MCF 10A (cell line): ENCODE measurements at regions of chr7 and their contacts with region 1.

Region 1: DNA sequence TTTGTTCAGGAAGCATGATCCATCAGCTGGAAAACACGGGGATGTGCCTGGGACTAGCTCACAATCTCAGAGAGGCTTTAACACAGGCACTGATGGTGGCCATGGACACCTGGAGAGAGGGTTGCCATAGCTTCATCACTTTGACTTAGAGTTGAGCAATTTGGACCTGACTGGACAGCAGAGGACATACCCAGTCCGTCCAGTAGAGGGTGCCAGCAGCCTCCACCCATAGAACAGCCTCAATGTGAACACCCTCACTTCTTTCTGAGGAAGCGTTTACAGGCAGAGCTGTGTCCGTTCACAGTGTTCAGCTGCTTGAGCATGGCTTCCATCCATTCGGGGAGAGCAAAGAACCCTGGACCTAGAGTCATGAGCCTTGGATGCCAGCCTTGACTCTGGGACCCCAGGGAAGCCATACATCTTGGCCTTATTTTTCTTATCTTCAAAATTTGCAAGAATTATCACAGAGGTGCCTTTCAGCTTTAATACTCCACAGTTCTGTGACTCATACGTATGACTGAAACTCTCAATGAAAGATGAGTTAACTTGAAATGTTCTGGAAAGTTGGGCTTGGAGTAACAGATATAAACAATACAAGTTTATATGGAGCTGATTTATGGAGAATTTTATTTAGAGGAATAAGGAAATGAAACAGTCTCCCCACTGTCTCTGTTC is 302.9 kb upstream of the PODXL start:
- DNase-seq: peak; percentile 76
- H3K4me3 Mint-ChIP-seq: no peak overlapping the region
- H3K27ac Mint-ChIP-seq: no peak overlapping the region
- H3K4me1 Mint-ChIP-seq: peaks cover 6% of the 10 kb centered on the region
- H3K27me3 Mint-ChIP-seq: peaks cover 14% of the 10 kb centered on the region
- CTCF ChIP-seq: peak; percentile 65

Region 2: GRCh38 chr7:131124001-131124629 is 735.2 kb before region 1 on chr7:
- CTCF ChIA-PET with region 1: no interaction called
- POLR2A ChIA-PET with region 1: no interaction called
- intact Hi-C with region 1: no loop called
- DNase-seq: no peak
- H3K4me3 Mint-ChIP-seq: no peak overlapping the region
- H3K27ac Mint-ChIP-seq: no peak overlapping the region
- H3K4me1 Mint-ChIP-seq: no peaks in the 10 kb centered on the region
- H3K27me3 Mint-ChIP-seq: no peaks in the 10 kb centered on the region
- CTCF ChIP-seq: no peak

Region 3: DNA sequence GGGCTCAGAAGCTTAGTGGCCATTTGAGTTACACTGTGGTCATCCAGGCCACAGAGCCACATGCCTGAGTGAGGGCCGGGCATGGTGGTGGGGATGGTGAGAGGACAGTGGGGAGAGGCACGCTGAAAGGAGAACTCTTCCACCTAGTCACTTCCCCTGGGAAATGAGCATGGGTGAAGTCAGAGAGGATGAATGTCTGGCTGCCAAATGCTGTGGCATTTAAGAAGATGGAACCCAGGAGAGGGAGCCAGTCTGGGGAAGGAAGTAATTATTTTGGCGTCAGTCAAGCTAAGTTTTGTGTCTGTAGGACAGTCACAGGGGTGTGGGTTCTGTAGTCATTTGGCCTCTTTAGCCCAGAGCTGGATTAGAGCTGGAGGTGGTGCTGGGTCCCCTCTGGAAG is 216.9 kb before region 1 on chr7:
- CTCF ChIA-PET with region 1: no interaction called
- POLR2A ChIA-PET with region 1: no interaction called
- intact Hi-C with region 1: no loop called
- DNase-seq: no peak
- H3K4me3 Mint-ChIP-seq: no peak overlapping the region
- H3K27ac Mint-ChIP-seq: no peak overlapping the region
- H3K4me1 Mint-ChIP-seq: no peaks in the 10 kb centered on the region
- H3K27me3 Mint-ChIP-seq: no peaks in the 10 kb centered on the region
- CTCF ChIP-seq: no peak

Region 4: GRCh38 chr7:131843898-131844331 is 15.4 kb before region 1 on chr7:
- CTCF ChIA-PET with region 1: interaction called, 23 read pairs
- POLR2A ChIA-PET with region 1: no interaction called
- intact Hi-C with region 1: no loop called
- DNase-seq: peak; percentile 43
- H3K4me3 Mint-ChIP-seq: no peak overlapping the region
- H3K27ac Mint-ChIP-seq: no peak overlapping the region
- H3K4me1 Mint-ChIP-seq: no peaks in the 10 kb centered on the region
- H3K27me3 Mint-ChIP-seq: no peaks in the 10 kb centered on the region
- CTCF ChIP-seq: no peak

Region 5: DNA sequence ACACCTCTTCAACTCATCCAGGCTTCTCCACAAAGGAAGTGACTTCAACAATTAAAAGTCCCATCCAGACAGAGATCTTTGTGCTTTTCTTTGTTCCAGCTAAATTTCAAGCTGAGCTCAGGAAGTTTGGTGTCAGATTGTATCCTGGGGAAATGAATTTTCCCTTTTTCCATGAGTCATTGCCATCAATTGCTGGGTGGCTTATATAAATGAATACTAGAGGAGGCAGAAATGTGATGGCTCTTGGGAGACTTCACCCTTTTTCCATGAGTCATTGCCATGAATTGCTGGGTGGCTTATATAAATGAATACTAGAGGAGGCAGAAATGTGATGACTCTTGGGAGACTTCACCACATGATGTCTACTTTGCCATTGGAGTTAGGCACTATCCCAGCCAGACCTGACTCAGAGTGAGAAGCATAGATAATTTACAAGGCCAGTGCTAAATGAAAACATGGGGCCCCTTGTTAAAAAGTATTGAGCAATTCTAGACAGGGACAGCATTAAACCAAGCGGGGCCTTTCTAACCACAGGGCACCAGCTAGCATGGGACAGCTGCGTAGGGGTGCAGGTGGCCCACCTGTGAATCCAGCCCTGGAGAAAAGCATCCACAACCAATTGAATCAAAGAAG is 36.4 kb after region 1 on chr7:
- CTCF ChIA-PET with region 1: interaction called, 7 read pairs
- POLR2A ChIA-PET with region 1: no interaction called
- intact Hi-C with region 1: loop called (anchors 5 kb)
- DNase-seq: peak; percentile 90
- H3K4me3 Mint-ChIP-seq: no peak overlapping the region
- H3K27ac Mint-ChIP-seq: peak overlapping the region; percentile 56
- H3K4me1 Mint-ChIP-seq: peaks cover 14% of the 10 kb centered on the region
- H3K27me3 Mint-ChIP-seq: no peaks in the 10 kb centered on the region
- CTCF ChIP-seq: no peak

Region 6: DNA sequence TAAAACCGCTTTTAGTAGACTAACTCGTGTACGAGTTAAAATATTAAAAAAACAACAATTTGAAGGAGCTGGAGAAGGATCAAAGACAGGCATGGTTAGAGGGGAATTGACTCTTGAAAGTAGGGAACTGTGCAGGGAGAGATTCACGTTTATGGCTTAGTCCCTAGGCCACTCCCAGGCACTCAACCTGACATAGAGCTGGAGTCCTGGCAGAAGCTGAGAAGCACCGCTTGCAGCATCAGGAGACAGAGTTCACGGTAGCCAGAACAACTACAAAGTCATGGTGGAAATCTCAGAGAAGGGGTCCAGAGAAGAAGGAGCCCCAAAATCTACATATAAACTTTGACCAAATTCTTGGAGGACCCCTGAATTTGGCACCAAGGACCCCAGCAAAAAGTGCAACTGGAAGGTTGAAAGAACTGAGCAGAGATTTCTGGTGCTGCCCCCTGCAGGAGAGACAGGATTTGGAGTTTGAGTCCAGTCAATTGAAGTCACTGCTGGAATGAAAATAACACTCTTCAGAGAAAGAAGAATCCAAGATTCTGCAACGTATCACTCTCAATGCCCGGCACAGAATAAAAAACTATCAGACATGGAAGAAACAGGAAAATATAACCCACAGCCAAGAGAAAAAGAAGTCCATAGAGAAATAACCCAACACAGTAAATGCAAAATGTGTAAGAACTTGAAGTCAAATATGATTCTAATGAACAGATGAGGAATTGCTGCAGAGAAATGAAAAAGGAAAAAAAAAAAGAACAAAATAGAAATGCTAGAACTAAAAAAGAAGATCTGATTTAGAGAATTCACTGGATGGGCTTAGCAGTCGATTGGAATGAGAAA is 190.4 kb after region 1 on chr7:
- CTCF ChIA-PET with region 1: interaction called, 4 read pairs
- POLR2A ChIA-PET with region 1: no interaction called
- intact Hi-C with region 1: loop called (anchors 1 kb)
- DNase-seq: peak; percentile 54
- H3K4me3 Mint-ChIP-seq: no peak overlapping the region
- H3K27ac Mint-ChIP-seq: no peak overlapping the region
- H3K4me1 Mint-ChIP-seq: no peaks in the 10 kb centered on the region
- H3K27me3 Mint-ChIP-seq: peaks cover 23% of the 10 kb centered on the region
- CTCF ChIP-seq: peak; percentile 48

Region 7: DNA sequence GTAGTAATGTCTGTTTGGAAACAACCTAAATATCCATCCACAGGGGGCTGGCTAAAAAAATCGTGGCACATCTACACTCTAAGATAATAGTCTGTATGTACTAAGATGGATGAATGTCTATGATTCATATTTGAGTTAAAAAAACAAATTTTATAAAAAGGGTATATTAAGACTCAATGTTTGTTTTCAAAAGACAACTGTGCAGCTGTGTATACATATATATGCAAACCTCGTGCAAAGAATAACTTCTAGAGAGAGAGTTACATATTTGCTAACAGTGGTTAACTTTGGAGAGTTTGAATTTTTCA is 393.5 kb after region 1 on chr7:
- CTCF ChIA-PET with region 1: interaction called, 6 read pairs
- POLR2A ChIA-PET with region 1: no interaction called
- intact Hi-C with region 1: loop called (anchors 1 kb)
- DNase-seq: no peak
- H3K4me3 Mint-ChIP-seq: no peak overlapping the region
- H3K27ac Mint-ChIP-seq: no peak overlapping the region
- H3K4me1 Mint-ChIP-seq: no peaks in the 10 kb centered on the region
- H3K27me3 Mint-ChIP-seq: no peaks in the 10 kb centered on the region
- CTCF ChIP-seq: no peak